CD4-positive, alpha-beta T cell (primary cell): ENCODE measurements at regions of chr3 and their contacts with region 1.

Region 1: GRCh38 chr3:60746695-60747416 is 504.4 kb downstream of the FHIT start:
- DNase-seq: no peak
- ATAC-seq: no peak
- H3K4me3 ChIP-seq: no peak overlapping the region
- H3K4me3 Mint-ChIP-seq: no peak overlapping the region
- H3K27ac ChIP-seq: no peak overlapping the region
- H3K27ac Mint-ChIP-seq: no peak overlapping the region
- H3K4me1 ChIP-seq: no peaks in the 10 kb centered on the region
- H3K4me1 Mint-ChIP-seq: no peaks in the 10 kb centered on the region
- H3K27me3 ChIP-seq: no peaks in the 10 kb centered on the region
- H3K27me3 Mint-ChIP-seq: no peaks in the 10 kb centered on the region
- CTCF ChIP-seq: no peak

Region 2: DNA sequence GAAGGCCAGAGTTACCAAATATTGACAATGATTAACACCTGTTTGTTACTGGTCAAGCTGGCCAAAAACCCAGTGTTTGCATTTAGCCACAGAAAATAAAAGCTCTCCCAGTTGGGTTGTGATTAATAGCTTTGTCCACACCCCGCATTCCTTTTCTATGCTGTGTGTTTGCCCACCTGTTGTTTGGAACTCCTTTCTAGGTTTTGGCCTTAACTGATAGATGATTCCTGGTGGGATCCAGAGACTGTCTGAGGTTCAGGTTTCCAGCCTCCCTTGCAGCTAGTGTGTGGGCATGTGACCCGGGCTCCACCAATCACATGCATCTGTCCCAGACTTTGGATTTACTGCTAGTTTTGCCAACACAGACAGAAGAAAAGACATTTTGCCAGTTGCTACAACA is 898.3 kb after region 1 on chr3:
- CTCF ChIA-PET with region 1: no interaction called
- POLR2A ChIA-PET with region 1: no interaction called
- intact Hi-C with region 1: loop called in 1 of 2 experiments (anchors 5 kb)
- DNase-seq: no peak
- ATAC-seq: no peak
- H3K4me3 ChIP-seq: no peak overlapping the region
- H3K4me3 Mint-ChIP-seq: no peak overlapping the region
- H3K27ac ChIP-seq: no peak overlapping the region
- H3K27ac Mint-ChIP-seq: no peak overlapping the region
- H3K4me1 ChIP-seq: no peaks in the 10 kb centered on the region
- H3K4me1 Mint-ChIP-seq: no peaks in the 10 kb centered on the region
- H3K27me3 ChIP-seq: no peaks in the 10 kb centered on the region
- H3K27me3 Mint-ChIP-seq: peaks cover 5% of the 10 kb centered on the region
- CTCF ChIP-seq: no peak